ENCODE measurements at regions of chr11 and their contacts with region 1.

Region 1: DNA sequence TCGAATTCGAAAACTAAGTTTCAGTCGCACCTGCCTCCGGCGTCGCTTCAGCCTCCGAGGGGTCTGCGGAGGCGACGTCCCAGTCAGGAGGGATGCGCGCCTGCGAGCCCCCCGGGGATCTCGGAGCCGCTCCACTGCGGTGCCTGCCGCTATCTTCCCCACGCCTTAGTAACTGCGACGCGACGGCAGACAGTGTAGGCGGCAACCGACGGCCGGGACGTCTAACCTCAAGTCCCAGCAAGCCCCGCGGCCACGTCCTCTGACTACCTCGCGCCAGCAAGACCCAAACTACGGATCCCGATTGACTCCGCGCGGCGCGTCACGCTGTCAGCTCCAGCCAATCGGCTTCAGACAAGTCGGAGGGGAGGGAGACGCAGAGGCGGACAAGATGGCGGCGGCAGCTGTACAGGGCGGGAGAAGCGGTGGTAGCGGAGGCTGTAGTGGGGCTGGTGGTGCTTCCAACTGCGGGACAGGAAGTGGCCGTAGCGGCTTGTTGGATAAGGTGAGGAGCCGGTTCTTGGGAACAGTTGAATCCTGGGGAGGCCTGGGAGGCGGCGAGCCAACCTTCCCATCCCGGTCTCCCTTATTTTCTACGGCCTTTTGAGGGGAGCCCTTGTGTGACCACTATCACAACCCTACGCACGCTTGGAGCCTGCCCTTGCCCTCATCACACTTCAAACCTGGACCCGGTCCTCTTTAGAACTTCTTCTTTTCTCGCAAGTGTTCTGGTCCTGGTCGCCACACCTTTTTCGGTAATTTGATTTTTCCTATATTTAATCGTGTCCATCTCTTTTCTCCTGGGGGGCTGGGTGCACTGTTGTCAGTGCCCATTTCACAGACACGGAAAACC is at the starts of genes SPCS2 and XRRA1:
- DNase-seq: peak; percentile 99
- H3K4me3 Mint-ChIP-seq: peak within 1 kb of the TSS; percentile 99
- H3K27ac Mint-ChIP-seq: peak within 1 kb of the TSS; percentile 91
- H3K4me1 Mint-ChIP-seq: peaks cover 39% of the 10 kb centered on the region
- H3K27me3 Mint-ChIP-seq: no peaks in the 10 kb centered on the region
- total RNA-seq, gene SPCS2: 126 to 138 TPM
- total RNA-seq, gene XRRA1: 9.1 to 13.0 TPM

Region 2: DNA sequence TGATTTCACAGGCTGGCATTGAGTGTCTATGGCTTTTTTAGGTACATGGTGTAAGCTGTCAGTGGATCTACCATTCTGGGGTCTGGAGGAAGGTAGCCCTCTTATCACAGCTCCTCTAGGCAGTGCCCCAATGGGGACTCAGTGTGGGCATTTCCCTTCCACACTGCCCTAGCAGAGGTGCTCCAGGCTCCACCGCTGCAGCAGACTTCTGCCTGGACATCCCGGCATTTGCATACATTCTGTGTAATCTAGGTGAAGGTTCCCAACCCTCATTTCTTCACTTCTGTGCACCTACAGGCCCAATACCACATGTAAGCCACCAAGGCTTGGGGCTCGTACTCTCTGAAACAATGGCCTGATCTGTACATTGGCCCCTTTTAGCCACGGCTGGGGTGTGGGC is 122.2 kb before region 1 on chr11:
- CTCF ChIA-PET with region 1: no interaction called
- POLR2A ChIA-PET with region 1: no interaction called
- intact Hi-C with region 1: no loop called
- DNase-seq: no peak
- H3K4me3 Mint-ChIP-seq: no peak overlapping the region
- H3K27ac Mint-ChIP-seq: no peak overlapping the region
- H3K4me1 Mint-ChIP-seq: no peaks in the 10 kb centered on the region
- H3K27me3 Mint-ChIP-seq: no peaks in the 10 kb centered on the region

Region 3: DNA sequence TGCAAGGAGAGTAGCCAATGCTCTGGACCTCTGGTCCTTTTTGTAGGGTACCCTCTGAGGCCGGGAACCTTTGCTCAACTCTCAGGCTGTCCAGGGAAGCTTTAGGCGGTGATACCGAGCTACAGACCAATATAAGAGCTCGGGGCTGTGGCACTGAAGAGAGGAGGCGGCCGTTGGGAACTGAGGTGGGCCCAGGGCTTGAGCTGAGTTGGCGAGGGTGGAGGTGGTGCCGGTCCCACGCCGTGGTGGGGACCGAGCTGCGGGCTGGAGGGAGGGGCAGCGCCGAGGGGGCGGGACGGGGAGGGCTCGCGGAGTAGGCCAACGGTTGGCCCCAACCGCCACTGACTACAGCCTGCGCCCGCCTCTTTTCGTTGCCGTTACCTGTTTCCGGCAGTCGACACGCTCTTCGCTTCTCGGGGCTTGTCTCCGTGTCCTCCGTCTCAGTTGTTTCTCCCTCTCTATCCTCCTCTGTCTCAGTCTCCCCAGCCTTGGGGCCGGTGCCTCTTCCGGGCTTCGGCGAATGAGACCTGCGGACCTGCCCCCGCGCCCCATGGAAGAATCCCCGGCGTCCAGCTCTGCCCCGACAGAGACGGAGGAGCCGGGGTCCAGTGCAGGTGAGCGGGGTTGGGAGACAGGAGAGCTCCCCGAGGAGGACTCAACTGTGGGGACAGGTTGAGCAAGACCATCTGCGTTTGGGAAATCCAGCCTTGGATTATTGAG is 39.6 kb after region 1 on chr11 and contains the start of gene NEU3:
- CTCF ChIA-PET with region 1: no interaction called
- POLR2A ChIA-PET with region 1: interaction called, 8 read pairs
- intact Hi-C with region 1: loop called (anchors 1 kb)
- DNase-seq: peak; percentile 91
- H3K4me3 Mint-ChIP-seq: peak within 1 kb of the TSS; percentile 91
- H3K27ac Mint-ChIP-seq: peak within 1 kb of the TSS; percentile 70
- H3K4me1 Mint-ChIP-seq: peaks cover 22% of the 10 kb centered on the region
- H3K27me3 Mint-ChIP-seq: no peaks in the 10 kb centered on the region
- total RNA-seq, gene NEU3: 13.6 to 14.3 TPM

Region 4: DNA sequence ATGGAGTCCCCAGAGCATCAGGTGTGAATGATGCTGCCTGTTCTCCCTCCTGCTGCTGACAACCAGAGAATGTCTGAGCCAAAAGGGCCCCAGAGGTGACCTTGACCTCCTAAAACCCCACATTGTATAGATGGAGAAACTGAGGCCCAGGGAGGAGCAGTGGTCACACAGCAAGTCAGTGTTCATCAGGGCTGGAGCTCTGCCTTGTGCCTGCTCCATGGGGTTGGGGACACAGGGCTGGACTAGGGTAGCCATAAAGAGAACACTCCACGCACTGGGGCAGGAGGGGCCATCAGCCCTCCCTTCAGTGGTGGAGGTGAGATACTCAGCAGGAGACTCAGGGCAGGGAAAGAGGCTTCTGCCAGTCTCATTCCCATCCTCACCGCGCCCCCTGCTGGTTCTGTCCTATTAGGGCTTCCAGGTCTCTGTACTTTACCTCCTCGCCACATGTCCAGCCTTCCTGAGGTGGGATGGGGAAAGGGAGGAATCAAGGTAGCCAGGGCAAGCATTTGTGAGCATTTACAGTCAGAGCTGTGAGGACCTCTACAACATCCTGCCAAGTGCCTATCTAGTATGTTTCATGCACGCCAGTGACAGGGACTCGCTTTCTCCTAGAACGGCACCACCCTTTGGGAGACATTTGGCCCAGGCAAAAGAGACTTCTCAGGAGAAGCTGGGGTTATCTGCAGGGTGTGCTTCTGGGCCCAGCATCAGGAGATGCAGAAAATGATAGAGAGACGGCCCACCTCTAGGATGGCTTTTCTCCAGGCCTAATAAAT is 82.8 kb after region 1 on chr11:
- CTCF ChIA-PET with region 1: no interaction called
- POLR2A ChIA-PET with region 1: no interaction called
- intact Hi-C with region 1: no loop called
- DNase-seq: peak; percentile 75
- H3K4me3 Mint-ChIP-seq: no peak overlapping the region
- H3K27ac Mint-ChIP-seq: no peak overlapping the region
- H3K4me1 Mint-ChIP-seq: peaks cover 3% of the 10 kb centered on the region
- H3K27me3 Mint-ChIP-seq: no peaks in the 10 kb centered on the region

Region 5: DNA sequence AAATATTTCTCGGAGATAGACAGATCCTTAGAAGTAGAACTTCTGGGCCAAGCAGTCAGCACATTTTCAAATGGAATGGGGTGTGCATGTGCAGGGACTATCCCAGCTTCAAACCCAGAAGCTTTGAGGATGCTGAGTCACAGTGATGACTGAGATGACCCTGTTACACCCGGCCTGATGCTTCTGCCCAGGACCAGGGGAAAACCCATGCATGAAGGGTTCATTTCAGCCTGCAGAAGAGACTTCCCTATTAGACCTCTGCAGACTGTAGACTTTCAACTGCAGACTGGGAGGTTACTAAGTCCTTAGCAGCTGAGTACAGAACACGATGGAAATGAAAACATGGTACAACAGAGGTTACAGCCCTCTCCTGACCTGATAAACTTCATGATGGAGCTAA is 151.2 kb after region 1 on chr11:
- CTCF ChIA-PET with region 1: no interaction called
- POLR2A ChIA-PET with region 1: no interaction called
- intact Hi-C with region 1: loop called (anchors 1 kb)
- DNase-seq: peak; percentile 79
- H3K4me3 Mint-ChIP-seq: no peak overlapping the region
- H3K27ac Mint-ChIP-seq: no peak overlapping the region
- H3K4me1 Mint-ChIP-seq: peaks cover 24% of the 10 kb centered on the region
- H3K27me3 Mint-ChIP-seq: peaks cover 43% of the 10 kb centered on the region

Region 6: GRCh38 chr11:75351791-75352587 is 402.9 kb after region 1 on chr11:
- CTCF ChIA-PET with region 1: no interaction called
- POLR2A ChIA-PET with region 1: no interaction called
- intact Hi-C with region 1: loop called (anchors 2 kb)
- DNase-seq: peak; percentile 65
- H3K4me3 Mint-ChIP-seq: peak overlapping the region; percentile 82
- H3K27ac Mint-ChIP-seq: peak overlapping the region; percentile 81
- H3K4me1 Mint-ChIP-seq: peaks cover 33% of the 10 kb centered on the region
- H3K27me3 Mint-ChIP-seq: no peaks in the 10 kb centered on the region

Measured in activated CD4-positive, alpha-beta memory T cell treated with anti-CD3 and anti-CD28 coated beads for 36 hours (primary cell).